A673 (cell line): ENCODE measurements at regions of chrX and their contacts with region 1.

Region 1: GRCh38 chrX:140057001-140057411 is 91.7 kb upstream of the CXorf66 start:
- DNase-seq: peak; percentile 89
- H3K4me3 ChIP-seq: no peak overlapping the region
- H3K27ac ChIP-seq: no peak overlapping the region
- H3K4me1 ChIP-seq: no peaks in the 10 kb centered on the region
- H3K27me3 ChIP-seq: no peaks in the 10 kb centered on the region
- CTCF ChIP-seq: peak; percentile 94

Region 2: GRCh38 chrX:140141444-140142029 is 84.5 kb after region 1 on chrX:
- CTCF ChIA-PET with region 1: interaction called, 9 read pairs
- POLR2A ChIA-PET with region 1: no interaction called
- intact Hi-C with region 1: loop called (anchors 1 kb)
- DNase-seq: peak; percentile 71
- H3K4me3 ChIP-seq: no peak overlapping the region
- H3K27ac ChIP-seq: no peak overlapping the region
- H3K4me1 ChIP-seq: no peaks in the 10 kb centered on the region
- H3K27me3 ChIP-seq: no peaks in the 10 kb centered on the region
- CTCF ChIP-seq: peak; percentile 78

Region 3: DNA sequence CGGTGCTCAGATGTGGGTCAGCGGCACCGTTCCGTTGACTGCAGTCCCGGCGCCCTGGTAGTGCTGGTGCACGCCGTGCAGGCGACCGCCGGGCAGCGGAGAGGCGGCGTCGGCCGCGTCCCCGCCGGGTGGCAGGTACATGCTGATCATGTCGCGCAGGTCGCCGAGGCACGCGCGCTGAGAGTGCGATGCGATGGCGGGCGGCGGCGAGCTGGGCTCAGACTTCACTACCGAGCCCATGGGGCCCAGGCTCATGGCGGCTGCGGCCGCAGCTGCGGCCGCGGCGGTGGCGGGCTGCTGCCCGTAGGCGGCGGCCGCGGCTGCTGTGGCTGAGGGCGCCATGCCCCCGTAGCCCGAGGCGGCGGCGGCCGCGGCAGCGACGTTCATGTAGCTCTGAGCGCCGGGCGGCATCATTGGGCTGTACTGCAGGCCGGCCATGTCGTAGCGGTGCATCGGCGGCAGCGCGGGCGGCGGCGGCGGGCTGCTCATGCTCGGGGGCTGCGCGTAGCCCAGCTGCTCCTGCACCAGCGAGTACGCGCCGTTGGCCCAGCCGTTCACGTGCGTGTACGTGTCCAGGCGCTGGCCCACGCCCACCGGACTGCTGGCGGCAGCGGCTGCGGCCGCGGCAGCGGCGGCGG is 446.8 kb after region 1 on chrX:
- CTCF ChIA-PET with region 1: interaction called, 4 read pairs
- POLR2A ChIA-PET with region 1: no interaction called
- intact Hi-C with region 1: loop called (anchors 5 kb)
- DNase-seq: peak; percentile 9
- H3K4me3 ChIP-seq: peak overlapping the region; percentile 33
- H3K27ac ChIP-seq: no peak overlapping the region
- H3K4me1 ChIP-seq: no peaks in the 10 kb centered on the region
- H3K27me3 ChIP-seq: peaks cover 100% of the 10 kb centered on the region
- CTCF ChIP-seq: no peak

Region 4: DNA sequence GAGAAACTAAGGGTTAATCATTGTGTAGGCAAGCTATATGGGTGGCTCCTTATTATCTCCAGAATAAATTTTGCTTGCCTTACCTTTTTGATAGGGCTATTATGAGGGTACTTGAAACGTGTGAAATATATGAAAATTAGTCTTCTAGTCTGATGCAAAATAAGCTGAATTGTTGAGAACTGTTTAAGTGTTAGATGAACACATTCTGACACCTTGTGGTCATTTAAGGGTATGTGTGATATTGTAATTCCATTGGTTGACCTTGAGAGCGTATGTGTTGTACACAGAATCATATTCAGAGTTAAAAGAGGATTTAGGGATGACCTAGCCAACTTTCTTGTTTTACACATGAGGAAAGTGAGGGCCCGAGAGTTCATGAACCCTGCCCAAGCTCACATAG is 607.9 kb after region 1 on chrX:
- CTCF ChIA-PET with region 1: interaction called, 6 read pairs
- POLR2A ChIA-PET with region 1: no interaction called
- intact Hi-C with region 1: loop called (anchors 2 kb)
- DNase-seq: peak; percentile 37
- H3K4me3 ChIP-seq: no peak overlapping the region
- H3K27ac ChIP-seq: no peak overlapping the region
- H3K4me1 ChIP-seq: no peaks in the 10 kb centered on the region
- H3K27me3 ChIP-seq: no peaks in the 10 kb centered on the region
- CTCF ChIP-seq: peak; percentile 48

Region 5: DNA sequence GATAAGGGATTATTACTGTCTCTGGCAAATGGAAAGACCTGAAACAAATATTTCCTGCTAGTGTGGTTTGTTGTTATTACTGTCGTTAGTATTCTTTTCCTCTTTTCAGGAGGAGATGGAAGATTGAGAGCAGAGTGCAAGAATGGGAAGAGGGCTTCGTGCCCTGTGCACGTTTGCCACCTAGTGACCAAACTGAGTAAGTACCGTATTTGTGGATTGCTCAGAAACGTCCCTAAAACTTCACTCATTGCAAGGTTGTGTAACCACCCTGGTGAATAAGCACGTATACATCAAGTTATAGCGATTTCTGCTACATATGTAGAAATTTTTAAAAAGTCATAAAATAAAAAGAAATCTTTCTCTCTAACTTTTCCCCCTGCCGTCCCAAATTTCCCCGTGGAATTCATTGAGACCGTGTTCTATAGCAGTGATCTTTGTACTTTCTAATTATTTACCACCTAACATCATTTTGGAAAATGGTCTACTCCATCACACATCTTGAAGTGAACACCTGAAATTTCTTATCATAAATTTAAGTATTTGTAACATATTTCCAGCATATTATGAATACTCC is 676.9 kb after region 1 on chrX:
- CTCF ChIA-PET with region 1: no interaction called
- POLR2A ChIA-PET with region 1: no interaction called
- intact Hi-C with region 1: loop called (anchors 5 kb)
- DNase-seq: peak; percentile 63
- H3K4me3 ChIP-seq: no peak overlapping the region
- H3K27ac ChIP-seq: no peak overlapping the region
- H3K4me1 ChIP-seq: no peaks in the 10 kb centered on the region
- H3K27me3 ChIP-seq: no peaks in the 10 kb centered on the region
- CTCF ChIP-seq: peak; percentile 76